GM12878 (cell line): ENCODE measurements at regions of chr3 and their contacts with region 1.

Region 1: GRCh38 chr3:122233101-122233952 is 49.9 kb downstream of the CASR start:
- DNase-seq: peak; percentile 86
- ATAC-seq: peak; percentile 83
- H3K4me3 ChIP-seq: 0 out of 2 replicates have a peak overlapping the region, but pooled peaks have one; percentile 13
- H3K27ac ChIP-seq: peak overlapping the region; percentile 86
- H3K4me1 ChIP-seq: peaks cover 38% of the 10 kb centered on the region
- H3K27me3 ChIP-seq: no peaks in the 10 kb centered on the region
- CTCF ChIP-seq: 0 out of 6 replicates have a peak, but pooled peaks of 1 of the 3 experiments have one; percentile 1
- EP300 ChIP-seq: peak; percentile 57 to 68; a peak in 3 of 4 replicates
- POLR2A ChIP-seq: no peak
- RAD21 ChIP-seq: no peak

Region 2: DNA sequence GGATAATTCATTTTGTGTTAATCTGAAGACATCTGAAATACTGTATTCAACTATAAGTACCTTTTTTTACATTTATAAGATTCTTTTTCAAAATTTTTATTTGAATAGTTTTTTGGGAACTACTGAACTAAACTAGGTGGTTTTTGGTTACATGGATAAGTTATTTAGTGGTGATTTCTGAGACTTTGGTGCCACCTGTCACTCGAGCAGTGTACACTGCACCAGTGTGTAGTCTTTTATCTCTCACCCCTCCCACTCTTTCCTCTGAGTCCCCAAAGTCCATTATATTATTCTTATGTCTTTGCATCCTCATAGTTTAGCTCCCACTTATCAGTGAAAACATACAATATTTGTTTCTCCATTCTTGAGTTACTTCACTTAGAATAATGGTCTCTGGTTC is 120.6 kb before region 1 on chr3:
- CTCF ChIA-PET with region 1: interaction called, 3 read pairs
- POLR2A ChIA-PET with region 1: interaction called, 9 read pairs
- RAD21 ChIA-PET with region 1: interaction called, 10 read pairs
- SMC1A ChIA-PET with region 1: interaction called, 10 read pairs
- in situ Hi-C with region 1: no loop called
- intact Hi-C with region 1: no loop called
- DNase-seq: no peak
- ATAC-seq: peak; percentile 71; the same call in 2 of the 3 replicates
- H3K4me3 ChIP-seq: no peak overlapping the region
- H3K27ac ChIP-seq: no peak overlapping the region
- H3K4me1 ChIP-seq: peaks cover 8% of the 10 kb centered on the region; the same call in 1 of the 2 replicates
- H3K27me3 ChIP-seq: no peaks in the 10 kb centered on the region
- CTCF ChIP-seq: no peak
- EP300 ChIP-seq: no peak
- POLR2A ChIP-seq: no peak
- RAD21 ChIP-seq: no peak

Region 3: DNA sequence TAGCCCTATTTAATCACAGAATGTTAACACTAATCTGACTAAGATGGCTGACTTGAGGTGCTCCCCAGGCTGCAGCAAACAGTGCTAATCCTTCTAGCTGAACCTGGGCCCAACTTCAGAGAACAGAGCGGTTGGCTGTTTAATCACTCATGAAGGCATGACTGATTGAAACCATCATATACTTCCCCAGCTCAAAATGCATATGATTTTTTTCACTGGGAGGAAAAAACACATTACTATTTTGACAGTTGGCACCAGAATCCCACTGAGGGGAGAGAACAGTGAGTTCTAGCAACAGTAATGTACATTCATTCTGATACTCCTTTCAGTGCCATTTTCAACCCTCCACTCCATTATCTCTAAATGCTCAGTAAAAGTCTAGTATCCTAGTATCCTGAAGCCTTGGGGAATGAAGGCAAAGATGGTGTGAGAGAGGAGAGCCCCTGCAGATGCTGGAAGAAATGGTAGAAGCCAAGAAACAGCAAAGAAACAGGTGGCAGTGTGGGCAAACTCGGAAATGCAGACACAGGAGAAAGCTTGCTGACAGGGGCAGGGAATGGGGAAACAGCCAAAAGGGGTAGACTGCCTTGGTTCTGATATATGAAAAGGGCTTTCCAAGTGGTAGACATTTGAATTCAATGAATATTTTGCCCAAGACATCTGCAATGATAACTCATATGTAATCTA is 84.2 kb before region 1 on chr3:
- CTCF ChIA-PET with region 1: no interaction called
- POLR2A ChIA-PET with region 1: no interaction called
- RAD21 ChIA-PET with region 1: no interaction called
- SMC1A ChIA-PET with region 1: interaction called, 11 read pairs
- in situ Hi-C with region 1: no loop called
- intact Hi-C with region 1: no loop called
- DNase-seq: no peak
- ATAC-seq: peak; percentile 32
- H3K4me3 ChIP-seq: no peak overlapping the region
- H3K27ac ChIP-seq: no peak overlapping the region
- H3K4me1 ChIP-seq: peaks cover 2% of the 10 kb centered on the region; the same call in 1 of the 2 replicates
- H3K27me3 ChIP-seq: no peaks in the 10 kb centered on the region
- CTCF ChIP-seq: no peak
- EP300 ChIP-seq: no peak
- POLR2A ChIP-seq: no peak
- RAD21 ChIP-seq: no peak

Region 4: GRCh38 chr3:122245513-122246174 is 12.3 kb after region 1 on chr3:
- CTCF ChIA-PET with region 1: interaction called, 62 read pairs
- POLR2A ChIA-PET with region 1: interaction called, 11 read pairs
- RAD21 ChIA-PET with region 1: interaction called, 28 read pairs
- SMC1A ChIA-PET with region 1: interaction called, 262 read pairs
- in situ Hi-C with region 1: no loop called
- intact Hi-C with region 1: no loop called
- DNase-seq: no peak
- ATAC-seq: peak; percentile 51
- H3K4me3 ChIP-seq: peak overlapping the region; percentile 66
- H3K27ac ChIP-seq: peak overlapping the region; percentile 63
- H3K4me1 ChIP-seq: peaks cover 14% of the 10 kb centered on the region
- H3K27me3 ChIP-seq: no peaks in the 10 kb centered on the region
- CTCF ChIP-seq: peak in 2 of 3 experiments; percentile 23 to 28; a peak in 2 of 6 replicates
- EP300 ChIP-seq: no peak
- POLR2A ChIP-seq: no peak
- RAD21 ChIP-seq: no peak

Region 5: GRCh38 chr3:122251428-122251827 is 18.1 kb after region 1 on chr3:
- CTCF ChIA-PET with region 1: interaction called, 62 read pairs
- POLR2A ChIA-PET with region 1: interaction called, 11 read pairs
- RAD21 ChIA-PET with region 1: interaction called, 48 read pairs
- SMC1A ChIA-PET with region 1: interaction called, 262 read pairs
- in situ Hi-C with region 1: no loop called
- intact Hi-C with region 1: no loop called
- DNase-seq: no peak
- ATAC-seq: peak; percentile 41
- H3K4me3 ChIP-seq: no peak overlapping the region
- H3K27ac ChIP-seq: no peak overlapping the region
- H3K4me1 ChIP-seq: peaks cover 26% of the 10 kb centered on the region
- H3K27me3 ChIP-seq: no peaks in the 10 kb centered on the region
- CTCF ChIP-seq: no peak
- EP300 ChIP-seq: no peak
- POLR2A ChIP-seq: no peak
- RAD21 ChIP-seq: no peak

Region 6: GRCh38 chr3:122265957-122266356 is 32.6 kb after region 1 on chr3:
- CTCF ChIA-PET with region 1: no interaction called
- POLR2A ChIA-PET with region 1: interaction called, 12 read pairs
- RAD21 ChIA-PET with region 1: interaction called, 36 read pairs
- SMC1A ChIA-PET with region 1: interaction called, 14 read pairs
- in situ Hi-C with region 1: no loop called
- intact Hi-C with region 1: no loop called
- DNase-seq: no peak
- ATAC-seq: peak; percentile 11; the same call in 2 of the 3 replicates
- H3K4me3 ChIP-seq: no peak overlapping the region
- H3K27ac ChIP-seq: peak overlapping the region; percentile 43; the same call in 1 of the 2 replicates
- H3K4me1 ChIP-seq: peaks cover 26% of the 10 kb centered on the region
- H3K27me3 ChIP-seq: no peaks in the 10 kb centered on the region
- CTCF ChIP-seq: 0 out of 6 replicates have a peak, but pooled peaks of 1 of the 3 experiments have one; percentile 3
- EP300 ChIP-seq: 0 out of 4 replicates have a peak, but pooled peaks of 1 of the 2 experiments have one; percentile 11
- POLR2A ChIP-seq: no peak
- RAD21 ChIP-seq: peak; percentile 38; the same call in 1 of the 2 replicates

Region 7: DNA sequence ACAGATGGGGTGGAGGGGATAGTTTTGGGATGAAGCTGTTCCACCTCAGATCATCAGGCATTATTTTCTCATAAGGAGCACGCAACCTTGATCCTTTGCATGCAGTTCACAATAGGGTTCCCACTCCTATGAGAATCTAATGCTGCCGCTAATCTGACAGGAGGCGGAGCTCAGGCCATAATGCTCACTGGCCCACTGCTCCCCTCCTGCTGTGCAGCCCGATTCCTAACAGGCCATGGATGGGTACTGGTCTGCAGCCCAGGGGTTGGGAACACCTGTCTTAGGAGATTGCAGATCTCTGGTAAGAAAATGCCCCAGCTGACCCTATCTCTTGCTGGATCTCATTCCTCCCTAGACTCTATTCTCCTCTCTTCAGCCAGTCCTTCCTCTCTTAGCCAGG is 98.6 kb after region 1 on chr3:
- CTCF ChIA-PET with region 1: no interaction called
- POLR2A ChIA-PET with region 1: no interaction called
- RAD21 ChIA-PET with region 1: no interaction called
- SMC1A ChIA-PET with region 1: no interaction called
- in situ Hi-C with region 1: no loop called
- intact Hi-C with region 1: no loop called
- DNase-seq: no peak
- ATAC-seq: no peak
- H3K4me3 ChIP-seq: no peak overlapping the region
- H3K27ac ChIP-seq: no peak overlapping the region
- H3K4me1 ChIP-seq: peaks cover 5% of the 10 kb centered on the region
- H3K27me3 ChIP-seq: no peaks in the 10 kb centered on the region
- CTCF ChIP-seq: no peak
- EP300 ChIP-seq: no peak
- POLR2A ChIP-seq: no peak
- RAD21 ChIP-seq: no peak